SK-N-SH (cell line): ENCODE measurements at regions of chr7 and their contacts with region 1.

Region 1: GRCh38 chr7:73726083-73726466 is 6.6 kb upstream of the STX1A start:
- DNase-seq: no peak
- H3K4me3 ChIP-seq: no peak overlapping the region
- H3K27ac ChIP-seq: no peak overlapping the region
- H3K4me1 ChIP-seq: peaks cover 5 to 8% of the 10 kb centered on the region in 2 experiments; a peak in 2 of 4 replicates
- H3K27me3 ChIP-seq: no peaks in the 10 kb centered on the region
- CTCF ChIP-seq: no peak
- EP300 ChIP-seq: no peak
- RAD21 ChIP-seq: no peak

Region 2: GRCh38 chr7:73463966-73464365 is 262.1 kb before region 1 on chr7:
- CTCF ChIA-PET with region 1: no interaction called
- POLR2A ChIA-PET with region 1: no interaction called
- DNase-seq: no peak
- H3K4me3 ChIP-seq: no peak overlapping the region
- H3K27ac ChIP-seq: no peak overlapping the region
- H3K4me1 ChIP-seq: no peaks in the 10 kb centered on the region
- H3K27me3 ChIP-seq: no peaks in the 10 kb centered on the region
- CTCF ChIP-seq: no peak
- EP300 ChIP-seq: no peak
- RAD21 ChIP-seq: no peak

Region 3: GRCh38 chr7:73533742-73534141 is 192.3 kb before region 1 on chr7:
- CTCF ChIA-PET with region 1: no interaction called
- POLR2A ChIA-PET with region 1: no interaction called
- DNase-seq: no peak
- H3K4me3 ChIP-seq: no peak overlapping the region
- H3K27ac ChIP-seq: no peak overlapping the region
- H3K4me1 ChIP-seq: no peaks in the 10 kb centered on the region
- H3K27me3 ChIP-seq: no peaks in the 10 kb centered on the region
- CTCF ChIP-seq: no peak
- EP300 ChIP-seq: no peak
- RAD21 ChIP-seq: no peak

Region 4: DNA sequence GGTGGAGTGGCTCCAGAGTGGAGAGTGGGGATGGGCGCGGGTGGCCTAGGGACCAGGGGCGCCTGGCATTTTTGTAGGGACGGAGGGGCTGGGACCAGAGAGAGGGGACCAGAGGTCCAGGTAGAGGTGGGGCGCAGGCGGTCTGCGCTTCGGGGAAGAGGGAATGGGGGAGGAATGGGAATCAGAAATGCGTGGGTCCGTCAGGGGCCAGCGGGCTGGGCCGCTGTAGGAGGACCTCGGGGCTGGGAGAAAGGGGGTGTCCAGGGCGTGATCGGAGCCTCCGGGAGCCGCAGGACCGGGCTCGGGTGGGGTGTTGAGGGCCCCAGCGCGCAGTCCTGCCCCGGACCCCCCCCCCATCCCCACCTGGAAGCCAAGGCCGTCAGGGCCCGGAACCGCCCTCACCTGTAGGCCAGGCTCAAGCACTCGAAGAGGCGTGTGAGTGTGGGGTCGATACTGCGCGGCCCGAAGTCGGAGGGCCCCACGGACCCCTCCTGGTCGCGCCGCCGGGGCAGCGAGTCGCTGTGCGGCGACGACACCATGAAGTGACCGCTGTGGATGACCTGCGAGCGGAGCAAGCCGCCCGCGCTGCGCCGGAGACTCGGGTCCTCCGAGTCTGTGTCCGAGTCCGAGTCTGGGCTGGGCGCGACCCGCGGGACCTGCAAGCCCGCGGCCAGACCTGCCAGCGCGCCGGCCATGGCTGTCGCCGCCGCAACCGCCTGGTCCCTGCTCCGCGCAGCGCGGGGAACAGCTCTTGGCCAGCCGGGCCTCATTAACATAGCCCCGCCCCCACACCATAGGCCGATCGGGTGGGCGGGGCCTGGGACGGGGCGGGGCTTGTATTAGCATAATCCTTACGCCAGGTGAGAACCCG is 102.0 kb before region 1 on chr7 and contains the start of gene MLXIPL:
- CTCF ChIA-PET with region 1: interaction called, 13 read pairs
- POLR2A ChIA-PET with region 1: no interaction called
- DNase-seq: peak; percentile 100
- H3K4me3 ChIP-seq: peak within 1 kb of the TSS; percentile 48 to 61
- H3K27ac ChIP-seq: no peak within 1 kb of the TSS
- H3K4me1 ChIP-seq: no peaks in the 10 kb centered on the region; a peak in 1 of 4 replicates
- H3K27me3 ChIP-seq: peaks cover 50% of the 10 kb centered on the region
- CTCF ChIP-seq: no peak
- EP300 ChIP-seq: no peak
- RAD21 ChIP-seq: no peak
- polyA plus RNA-seq, gene MLXIPL: 0.21 and 0.32 TPM in 2 replicates

Region 5: DNA sequence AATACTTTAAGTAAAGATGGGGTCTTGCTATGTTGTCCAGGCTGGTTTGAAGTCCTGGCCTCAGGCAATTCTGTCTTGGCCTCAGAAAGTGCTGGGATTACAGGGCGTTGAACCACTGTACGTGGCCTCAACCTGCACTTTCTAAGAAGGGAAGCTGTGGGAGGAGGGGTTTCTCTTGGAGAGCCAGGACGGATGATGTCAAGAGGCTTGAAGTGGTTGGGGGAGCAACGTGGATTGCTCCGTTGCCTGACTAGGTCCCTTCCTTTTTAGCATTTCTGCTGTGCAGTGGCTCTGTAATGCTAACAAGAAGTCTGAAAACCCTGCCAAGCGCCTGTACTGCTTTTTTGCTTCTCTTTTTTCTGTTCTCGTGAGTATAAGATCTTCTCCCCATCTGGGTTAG is 35.4 kb before region 1 on chr7:
- CTCF ChIA-PET with region 1: interaction called, 13 read pairs
- POLR2A ChIA-PET with region 1: no interaction called
- DNase-seq: no peak
- H3K4me3 ChIP-seq: no peak overlapping the region
- H3K27ac ChIP-seq: no peak overlapping the region
- H3K4me1 ChIP-seq: no peaks in the 10 kb centered on the region
- H3K27me3 ChIP-seq: no peaks in the 10 kb centered on the region
- CTCF ChIP-seq: no peak
- EP300 ChIP-seq: no peak
- RAD21 ChIP-seq: no peak

Region 6: GRCh38 chr7:73712773-73713172 is 13.3 kb before region 1 on chr7:
- CTCF ChIA-PET with region 1: interaction called, 20 read pairs
- POLR2A ChIA-PET with region 1: no interaction called
- DNase-seq: no peak
- H3K4me3 ChIP-seq: no peak overlapping the region
- H3K27ac ChIP-seq: 0 out of 4 replicates have a peak overlapping the region, but pooled peaks of 1 of the 2 experiments have one; percentile 0
- H3K4me1 ChIP-seq: peaks cover under 1 to 49% of the 10 kb centered on the region in 2 experiments; a peak in 3 of 4 replicates
- H3K27me3 ChIP-seq: no peaks in the 10 kb centered on the region
- CTCF ChIP-seq: no peak
- EP300 ChIP-seq: no peak
- RAD21 ChIP-seq: no peak

Region 7: GRCh38 chr7:73851410-73852234 is 125.5 kb after region 1 on chr7:
- CTCF ChIA-PET with region 1: interaction called, 12 read pairs
- POLR2A ChIA-PET with region 1: no interaction called
- DNase-seq: no peak
- H3K4me3 ChIP-seq: peak overlapping the region in 1 of 2 experiments; percentile 17; a peak in 2 of 4 replicates
- H3K27ac ChIP-seq: peak overlapping the region; percentile 1 to 100; a peak in 3 of 4 replicates
- H3K4me1 ChIP-seq: peaks cover 2 to 22% of the 10 kb centered on the region in 2 experiments; a peak in 3 of 4 replicates
- H3K27me3 ChIP-seq: no peaks in the 10 kb centered on the region
- CTCF ChIP-seq: no peak
- EP300 ChIP-seq: peak; percentile 27 to 97; a peak in 2 of 4 replicates
- RAD21 ChIP-seq: no peak